ENCODE measurements at regions of chr14 and their contacts with region 1.

Region 1: DNA sequence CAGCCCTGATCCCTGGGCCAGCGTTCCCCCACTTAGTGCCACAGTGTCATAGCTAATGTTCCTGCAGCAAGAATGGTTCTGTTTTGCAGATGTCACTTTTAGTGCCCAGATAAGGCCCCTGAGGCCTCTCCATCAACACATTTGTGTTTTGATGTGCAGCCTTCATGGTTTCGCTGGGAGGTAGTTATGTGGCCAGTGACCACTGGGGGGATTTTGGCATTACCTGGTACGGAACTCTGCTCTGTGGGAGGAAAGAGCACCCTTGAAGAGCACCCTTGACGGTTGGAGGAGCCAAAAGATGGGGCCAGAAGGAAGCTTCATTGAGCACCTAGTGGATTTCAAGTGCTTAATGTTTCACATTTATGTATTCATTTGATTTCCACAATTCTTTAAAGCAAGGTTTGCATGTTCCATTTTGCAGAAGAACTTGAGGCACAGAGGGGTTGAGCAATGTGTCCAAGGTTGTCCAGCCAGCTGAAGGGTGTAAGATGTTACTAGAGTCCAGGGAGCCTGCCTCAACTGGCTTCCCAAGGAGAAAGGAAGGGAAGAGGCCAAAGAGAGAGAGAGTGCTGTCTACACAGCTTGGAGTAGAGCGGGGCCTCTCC is 13.0 kb downstream of the SERPINA11 start:
- DNase-seq: no peak
- H3K4me3 ChIP-seq: no peak overlapping the region
- CTCF ChIP-seq: no peak

Region 2: DNA sequence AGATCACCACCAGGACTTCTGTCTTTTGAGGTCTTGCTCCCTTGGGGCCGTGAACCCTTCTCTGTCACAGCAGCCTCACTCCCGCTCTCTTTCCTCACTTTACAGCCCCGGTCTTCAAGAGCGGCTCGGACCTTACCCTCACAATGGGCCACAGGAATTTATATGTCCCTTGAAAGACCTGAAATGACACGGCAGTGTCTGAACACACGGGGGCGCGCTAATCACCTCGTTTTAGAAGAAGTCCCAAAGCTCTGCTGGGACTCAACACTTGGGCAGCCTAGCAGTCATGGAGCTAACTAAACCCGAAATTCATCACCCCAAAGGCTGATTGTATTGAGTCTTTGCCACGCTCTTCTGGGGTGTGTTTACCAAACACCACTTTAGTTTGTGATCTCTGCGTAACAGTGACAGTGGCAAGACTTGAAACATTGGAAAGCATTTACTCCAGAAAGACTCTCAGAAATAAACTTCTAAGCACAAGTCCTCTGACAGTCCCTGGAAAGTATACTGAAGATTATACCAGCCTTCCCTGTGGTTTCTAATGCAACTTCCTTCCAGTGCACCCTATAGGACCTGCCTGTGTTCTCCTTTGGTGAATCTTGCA is 16.0 kb before region 1 on chr14:
- CTCF ChIA-PET with region 1: interaction called, 52 read pairs
- POLR2A ChIA-PET with region 1: no interaction called
- DNase-seq: no peak
- H3K4me3 ChIP-seq: no peak overlapping the region
- CTCF ChIP-seq: peak; percentile 65

Region 3: DNA sequence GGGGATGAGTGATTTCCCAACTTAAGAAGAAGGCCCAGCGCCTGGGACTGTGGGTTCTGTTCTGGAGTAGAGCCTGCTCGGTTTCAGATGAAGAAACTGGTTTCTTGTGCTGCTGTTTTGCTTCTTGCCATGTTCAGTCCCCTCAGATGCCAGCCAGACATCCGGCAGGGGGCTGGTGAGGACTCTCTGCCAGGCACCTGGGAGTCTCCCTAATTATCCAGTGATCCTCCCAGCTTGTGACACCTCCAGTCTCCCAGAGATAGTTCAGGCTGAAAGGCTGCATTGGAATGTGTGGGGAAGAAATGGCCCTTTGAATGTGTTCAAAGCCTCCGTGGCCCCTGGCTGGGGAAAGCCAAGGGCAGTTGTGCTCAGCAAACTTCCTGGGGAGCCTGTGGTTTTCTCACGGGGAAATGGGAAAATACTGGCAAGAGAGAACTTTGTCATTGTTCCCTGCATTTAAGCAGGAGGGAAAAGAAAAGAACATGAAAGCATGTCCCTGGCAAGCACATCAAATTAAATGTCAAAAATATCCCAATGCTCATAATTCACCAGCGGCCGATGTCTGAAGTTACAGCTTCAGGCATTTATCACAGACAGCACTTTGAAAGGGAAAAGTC is 78.2 kb after region 1 on chr14:
- CTCF ChIA-PET with region 1: no interaction called
- POLR2A ChIA-PET with region 1: no interaction called
- DNase-seq: no peak
- H3K4me3 ChIP-seq: no peak overlapping the region
- CTCF ChIP-seq: no peak

Region 4: GRCh38 chr14:94536823-94537222 is 97.3 kb after region 1 on chr14:
- CTCF ChIA-PET with region 1: interaction called, 17 read pairs
- POLR2A ChIA-PET with region 1: no interaction called
- DNase-seq: no peak
- H3K4me3 ChIP-seq: no peak overlapping the region
- CTCF ChIP-seq: no peak

Region 5: GRCh38 chr14:94548999-94549985 is 109.7 kb after region 1 on chr14:
- CTCF ChIA-PET with region 1: interaction called, 50 read pairs
- POLR2A ChIA-PET with region 1: no interaction called
- DNase-seq: no peak
- H3K4me3 ChIP-seq: no peak overlapping the region
- CTCF ChIP-seq: peak; percentile 83

Region 6: GRCh38 chr14:94681300-94682060 is 241.9 kb after region 1 on chr14:
- CTCF ChIA-PET with region 1: interaction called, 34 read pairs
- POLR2A ChIA-PET with region 1: no interaction called
- DNase-seq: no peak
- H3K4me3 ChIP-seq: no peak overlapping the region
- CTCF ChIP-seq: peak; percentile 73

Region 7: GRCh38 chr14:94689218-94689984 is 249.8 kb after region 1 on chr14:
- CTCF ChIA-PET with region 1: interaction called, 10 read pairs
- POLR2A ChIA-PET with region 1: no interaction called
- DNase-seq: no peak
- H3K4me3 ChIP-seq: peak overlapping the region; percentile 33
- CTCF ChIP-seq: peak; percentile 97

Measured in AG04449 (cell line).